Calu3 (cell line): ENCODE measurements at regions of chr5 and their contacts with region 1.

Region 1: GRCh38 chr5:92916036-92916435 is 665.0 kb downstream of the NR2F1-AS1 start:
- DNase-seq: no peak
- H3K4me3 Mint-ChIP-seq: peak overlapping the region; percentile 40
- H3K27ac Mint-ChIP-seq: peak overlapping the region; percentile 92
- H3K4me1 Mint-ChIP-seq: peaks cover 55% of the 10 kb centered on the region
- H3K27me3 Mint-ChIP-seq: no peaks in the 10 kb centered on the region
- CTCF ChIP-seq: no peak

Region 2: GRCh38 chr5:92641031-92641962 is 274.7 kb before region 1 on chr5:
- CTCF ChIA-PET with region 1: no interaction called
- intact Hi-C with region 1: no loop called
- DNase-seq: peak; percentile 51
- H3K4me3 Mint-ChIP-seq: peak overlapping the region; percentile 68
- H3K27ac Mint-ChIP-seq: peak overlapping the region; percentile 67
- H3K4me1 Mint-ChIP-seq: peaks cover 12% of the 10 kb centered on the region
- H3K27me3 Mint-ChIP-seq: no peaks in the 10 kb centered on the region
- CTCF ChIP-seq: no peak

Region 3: GRCh38 chr5:92969781-92970237 is 53.8 kb after region 1 on chr5:
- CTCF ChIA-PET with region 1: interaction called, 5 read pairs
- intact Hi-C with region 1: loop called (anchors 2 kb)
- DNase-seq: peak; percentile 61
- H3K4me3 Mint-ChIP-seq: peak overlapping the region; percentile 54
- H3K27ac Mint-ChIP-seq: peak overlapping the region; percentile 59
- H3K4me1 Mint-ChIP-seq: peaks cover 40% of the 10 kb centered on the region
- H3K27me3 Mint-ChIP-seq: no peaks in the 10 kb centered on the region
- CTCF ChIP-seq: no peak

Region 4: DNA sequence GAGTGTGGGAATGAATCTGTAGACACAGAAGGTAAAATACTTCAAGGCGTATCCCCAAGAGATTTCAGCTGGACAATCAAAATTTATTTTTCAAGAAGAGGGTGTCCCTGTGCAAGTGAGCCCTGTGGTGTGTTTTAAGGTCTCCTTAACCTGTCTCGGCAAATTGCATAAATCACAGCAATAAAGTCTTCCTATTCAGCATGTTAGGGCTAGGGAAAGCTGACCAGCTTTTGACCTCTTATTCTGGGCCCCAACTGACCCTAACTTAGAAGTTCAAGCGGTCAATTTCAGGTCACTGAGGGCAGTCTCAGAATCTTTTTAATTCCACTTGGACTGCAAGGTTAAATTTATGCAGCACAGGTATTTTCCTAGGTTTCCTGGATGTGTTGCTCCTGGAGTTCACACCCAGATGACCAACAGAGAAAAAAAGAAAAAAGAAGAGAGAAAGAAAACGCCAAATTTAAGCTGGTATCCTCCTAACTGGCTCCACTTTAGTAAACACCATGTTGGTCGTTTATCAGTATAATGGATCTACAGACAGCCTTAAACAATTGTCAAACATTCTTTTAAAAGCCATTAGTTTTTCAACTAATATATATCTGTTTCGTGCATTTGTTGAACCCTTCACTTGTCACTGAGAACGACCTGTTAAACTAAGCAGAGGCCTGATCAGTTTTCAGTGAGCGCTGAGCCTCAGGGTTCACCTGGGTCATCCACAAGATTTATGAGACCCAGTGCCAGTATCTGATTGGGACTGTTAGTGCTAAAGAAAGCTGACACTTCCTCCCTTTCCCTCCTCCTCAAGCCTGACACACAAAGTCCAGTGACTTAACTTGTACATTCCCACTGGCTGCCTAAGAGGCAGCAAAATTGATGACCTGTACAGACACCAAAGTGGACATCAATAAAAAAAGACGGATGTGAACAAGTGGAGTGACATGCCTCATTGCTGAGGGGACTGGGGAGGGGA is 118.9 kb after region 1 on chr5:
- CTCF ChIA-PET with region 1: no interaction called
- intact Hi-C with region 1: no loop called
- DNase-seq: no peak
- H3K4me3 Mint-ChIP-seq: no peak overlapping the region
- H3K27ac Mint-ChIP-seq: no peak overlapping the region
- H3K4me1 Mint-ChIP-seq: no peaks in the 10 kb centered on the region
- H3K27me3 Mint-ChIP-seq: no peaks in the 10 kb centered on the region
- CTCF ChIP-seq: no peak

Region 5: GRCh38 chr5:93078082-93079038 is 162.3 kb after region 1 on chr5:
- CTCF ChIA-PET with region 1: no interaction called
- intact Hi-C with region 1: loop called (anchors 2 kb)
- DNase-seq: peak; percentile 95
- H3K4me3 Mint-ChIP-seq: peak overlapping the region; percentile 61
- H3K27ac Mint-ChIP-seq: peak overlapping the region; percentile 83
- H3K4me1 Mint-ChIP-seq: peaks cover 45% of the 10 kb centered on the region
- H3K27me3 Mint-ChIP-seq: no peaks in the 10 kb centered on the region
- CTCF ChIP-seq: no peak

Region 6: DNA sequence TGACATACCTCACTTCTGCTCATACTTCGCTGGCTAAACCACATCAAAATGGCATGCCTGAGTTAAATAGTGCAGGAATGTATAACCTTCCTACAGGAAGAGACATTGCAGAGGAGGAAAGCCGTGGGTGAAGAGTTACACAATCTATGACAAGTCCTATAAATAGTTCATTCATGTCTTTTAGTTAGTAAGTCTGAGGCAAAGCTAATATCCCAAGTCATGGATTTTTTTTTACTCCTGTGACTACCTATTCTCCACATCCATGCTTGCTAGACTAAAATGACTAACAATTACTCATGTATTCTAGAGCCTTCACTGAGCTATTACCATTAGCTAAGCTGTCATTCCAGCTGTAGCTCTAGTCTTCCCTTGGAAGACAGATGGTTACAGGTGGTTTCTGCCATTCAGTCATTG is 273.7 kb after region 1 on chr5:
- CTCF ChIA-PET with region 1: no interaction called
- intact Hi-C with region 1: loop called (anchors 5 kb)
- DNase-seq: no peak
- H3K4me3 Mint-ChIP-seq: no peak overlapping the region
- H3K27ac Mint-ChIP-seq: peak overlapping the region; percentile 55
- H3K4me1 Mint-ChIP-seq: peaks cover 80% of the 10 kb centered on the region
- H3K27me3 Mint-ChIP-seq: no peaks in the 10 kb centered on the region
- CTCF ChIP-seq: no peak

Region 7: GRCh38 chr5:93336330-93337110 is 420.5 kb after region 1 on chr5:
- CTCF ChIA-PET with region 1: no interaction called
- intact Hi-C with region 1: no loop called
- DNase-seq: no peak
- H3K4me3 Mint-ChIP-seq: no peak overlapping the region
- H3K27ac Mint-ChIP-seq: no peak overlapping the region
- H3K4me1 Mint-ChIP-seq: no peaks in the 10 kb centered on the region
- H3K27me3 Mint-ChIP-seq: no peaks in the 10 kb centered on the region
- CTCF ChIP-seq: no peak

Region 8: DNA sequence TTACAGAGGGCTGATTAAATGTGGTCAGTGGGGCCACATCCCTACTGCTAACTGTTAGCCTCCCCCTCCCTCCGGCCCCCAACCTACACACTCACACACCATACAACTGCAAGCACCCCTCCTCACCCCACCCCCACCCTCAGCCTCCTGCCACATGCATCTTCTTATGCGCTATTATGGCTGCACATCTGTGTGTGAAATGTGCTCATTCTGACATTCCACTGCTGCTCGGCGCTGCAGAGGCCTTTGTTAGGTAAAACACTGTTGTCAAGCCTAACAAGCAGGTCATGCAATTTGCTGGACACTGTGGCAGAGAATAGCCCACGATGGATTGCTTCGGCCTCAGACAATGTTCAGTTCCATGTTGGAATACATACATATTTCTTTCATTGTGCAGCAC is 491.4 kb after region 1 on chr5:
- CTCF ChIA-PET with region 1: no interaction called
- intact Hi-C with region 1: loop called (anchors 10 kb)
- DNase-seq: no peak
- H3K4me3 Mint-ChIP-seq: no peak overlapping the region
- H3K27ac Mint-ChIP-seq: no peak overlapping the region
- H3K4me1 Mint-ChIP-seq: peaks cover 20% of the 10 kb centered on the region
- H3K27me3 Mint-ChIP-seq: no peaks in the 10 kb centered on the region
- CTCF ChIP-seq: no peak

Region 9: GRCh38 chr5:93800988-93801811 is 885.2 kb after region 1 on chr5:
- CTCF ChIA-PET with region 1: no interaction called
- intact Hi-C with region 1: loop called (anchors 10 kb)
- DNase-seq: peak; percentile 58
- H3K4me3 Mint-ChIP-seq: no peak overlapping the region
- H3K27ac Mint-ChIP-seq: peak overlapping the region; percentile 55
- H3K4me1 Mint-ChIP-seq: peaks cover 15% of the 10 kb centered on the region
- H3K27me3 Mint-ChIP-seq: no peaks in the 10 kb centered on the region
- CTCF ChIP-seq: peak; percentile 84